AG04449 (cell line): ENCODE measurements at regions of chr3 and their contacts with region 1.

Region 1: DNA sequence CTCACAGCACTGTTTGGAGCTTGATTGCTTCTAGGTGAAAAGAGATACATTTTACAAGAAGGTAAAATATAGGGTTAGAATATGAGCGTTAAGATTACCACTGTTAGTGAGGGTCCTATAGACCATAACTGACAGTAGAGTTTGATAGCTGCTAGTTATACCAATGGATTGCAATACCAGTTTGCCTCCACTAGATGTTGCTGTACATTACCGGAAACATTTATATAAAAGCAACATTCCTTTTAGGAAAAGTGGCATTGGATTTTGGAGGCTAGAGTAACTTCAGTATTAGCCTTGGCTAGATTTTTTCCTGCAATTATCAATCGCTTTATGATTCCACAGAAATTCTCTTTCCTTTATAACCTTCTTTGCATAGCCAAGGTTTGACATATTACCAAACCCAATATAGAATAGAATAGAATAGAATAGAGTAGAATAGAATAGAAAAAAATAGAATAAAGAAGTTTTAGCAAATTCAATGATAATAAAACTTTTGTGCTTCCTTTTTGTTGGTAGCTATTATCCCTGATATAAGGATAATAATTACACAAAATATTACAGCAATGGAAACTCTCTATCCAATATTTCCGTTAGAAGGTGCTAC is 1093.6 kb upstream of the ALCAM start:
- DNase-seq: peak; percentile 3
- H3K4me3 ChIP-seq: no peak overlapping the region
- CTCF ChIP-seq: peak; percentile 67

Region 2: DNA sequence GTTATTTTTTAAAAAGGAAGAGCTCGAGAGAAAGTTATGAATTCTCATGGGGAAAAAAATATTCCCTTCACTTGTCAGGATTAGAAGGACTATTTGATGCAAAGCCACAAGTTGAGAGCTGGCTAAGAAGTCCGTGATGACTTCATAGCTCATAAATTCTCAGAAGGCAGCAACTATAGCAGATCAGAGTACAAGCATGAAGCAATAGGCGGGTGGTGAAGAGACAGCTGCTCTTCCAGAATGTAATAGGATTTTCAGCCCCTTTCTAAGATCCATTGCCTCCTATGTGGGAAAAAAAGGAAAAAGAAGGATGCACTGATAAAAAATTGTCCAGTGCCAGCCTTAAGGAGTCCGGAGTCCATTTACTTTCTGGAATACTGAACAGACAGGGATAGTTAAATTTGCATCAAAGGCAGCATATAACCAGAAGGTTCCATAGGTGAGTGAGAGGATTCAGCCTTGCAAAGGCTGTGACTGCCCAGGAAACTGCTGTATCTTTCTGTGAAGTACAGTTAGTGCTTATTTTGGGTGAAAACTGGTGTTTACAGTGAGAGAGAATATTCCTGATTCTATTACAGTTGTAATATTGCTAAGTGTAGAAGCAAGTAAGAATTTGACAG is 164.1 kb after region 1 on chr3:
- CTCF ChIA-PET with region 1: no interaction called
- POLR2A ChIA-PET with region 1: no interaction called
- DNase-seq: peak; percentile 73
- H3K4me3 ChIP-seq: no peak overlapping the region
- CTCF ChIP-seq: no peak

Region 3: GRCh38 chr3:104460477-104461406 is 187.6 kb after region 1 on chr3:
- CTCF ChIA-PET with region 1: interaction called, 36 read pairs
- POLR2A ChIA-PET with region 1: no interaction called
- DNase-seq: peak; percentile 49
- H3K4me3 ChIP-seq: no peak overlapping the region
- CTCF ChIP-seq: peak; percentile 46

Region 4: GRCh38 chr3:105366326-105367062 is 1093.3 kb after region 1 on chr3 and contains the start of gene ALCAM:
- CTCF ChIA-PET with region 1: interaction called, 20 read pairs
- POLR2A ChIA-PET with region 1: no interaction called
- DNase-seq: peak; percentile 95
- H3K4me3 ChIP-seq: peak within 1 kb of the TSS; percentile 95
- CTCF ChIP-seq: peak; percentile 94